CD4-positive, alpha-beta T cell (primary cell): ENCODE measurements at regions of chr17 and their contacts with region 1.

Region 1: GRCh38 chr17:77476931-77477877 is 336.4 kb downstream of the SEC14L1 start:
- DNase-seq: peak in 2 of 14 experiments; percentile 47 to 48
- ATAC-seq: peak; percentile 33
- H3K4me3 ChIP-seq: no peak overlapping the region
- H3K4me3 Mint-ChIP-seq: peak overlapping the region; percentile 74
- H3K27ac ChIP-seq: peak overlapping the region; percentile 58 to 75
- H3K27ac Mint-ChIP-seq: peak overlapping the region; percentile 97
- H3K4me1 ChIP-seq: peaks cover 98% of the 10 kb centered on the region
- H3K4me1 Mint-ChIP-seq: peaks cover 79% of the 10 kb centered on the region
- H3K27me3 ChIP-seq: no peaks in the 10 kb centered on the region
- H3K27me3 Mint-ChIP-seq: no peaks in the 10 kb centered on the region
- CTCF ChIP-seq: no peak

Region 2: DNA sequence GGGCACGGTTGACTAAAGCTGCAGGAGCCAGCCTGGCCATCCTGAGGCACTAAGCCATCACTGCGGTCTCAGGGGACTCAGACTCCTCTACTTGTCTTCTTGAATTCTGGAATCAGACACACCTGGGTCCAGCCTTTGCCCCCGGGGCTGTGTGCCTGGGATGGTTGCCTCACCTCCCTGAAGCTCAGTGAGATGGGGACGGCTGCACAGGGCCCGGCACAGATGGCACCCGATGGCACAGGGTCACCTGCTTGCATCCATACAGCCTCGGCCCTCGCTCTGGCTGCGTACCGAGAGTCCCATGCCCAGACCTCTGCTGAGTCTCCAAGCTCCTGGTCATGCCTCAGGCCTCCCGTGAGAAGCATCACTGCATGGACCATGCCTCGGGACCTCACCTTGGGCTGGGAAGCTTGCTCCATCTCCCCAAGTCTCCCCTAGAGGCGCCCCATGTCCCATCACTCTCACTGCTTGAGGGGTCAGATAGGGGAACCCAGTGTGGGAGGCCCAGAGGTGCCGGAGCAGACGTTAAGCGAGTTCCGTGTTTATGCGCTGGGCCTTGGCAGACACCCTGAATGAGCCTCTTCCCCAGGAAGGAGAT is 20.2 kb before region 1 on chr17:
- CTCF ChIA-PET with region 1: interaction called, 15 read pairs
- POLR2A ChIA-PET with region 1: interaction called, 90 read pairs
- intact Hi-C with region 1: loop called (anchors 2 kb)
- DNase-seq: peak in 4 of 14 experiments; percentile 47 to 68 (median 60)
- ATAC-seq: peak; percentile 7
- H3K4me3 ChIP-seq: peak overlapping the region; percentile 94
- H3K4me3 Mint-ChIP-seq: peak overlapping the region; percentile 98
- H3K27ac ChIP-seq: peak overlapping the region; percentile 83 to 90
- H3K27ac Mint-ChIP-seq: peak overlapping the region; percentile 93
- H3K4me1 ChIP-seq: peaks cover 93% of the 10 kb centered on the region
- H3K4me1 Mint-ChIP-seq: peaks cover 72% of the 10 kb centered on the region
- H3K27me3 ChIP-seq: no peaks in the 10 kb centered on the region
- H3K27me3 Mint-ChIP-seq: no peaks in the 10 kb centered on the region
- CTCF ChIP-seq: no peak